ENCODE measurements at regions of chr14 and their contacts with region 1.

Region 1: DNA sequence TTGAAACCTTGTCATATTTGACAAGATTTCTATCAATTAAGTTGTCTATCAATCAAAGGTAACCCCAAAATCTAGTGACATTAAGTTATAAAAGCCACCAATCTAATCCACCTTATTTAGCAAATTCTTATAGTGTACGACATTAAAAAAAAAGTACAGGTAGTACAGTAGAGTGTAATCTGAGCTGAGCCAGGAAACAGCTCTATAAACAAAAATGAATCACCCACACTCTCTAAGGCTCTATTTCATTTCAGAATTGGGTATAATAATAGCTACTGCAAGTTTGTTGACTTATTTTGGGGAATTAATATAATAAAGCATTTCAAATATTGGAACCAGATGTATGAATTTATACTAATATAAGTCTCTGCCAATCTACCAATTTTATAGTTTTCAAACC is 342.4 kb upstream of the FLRT2 start:
- DNase-seq: no peak
- H3K4me3 ChIP-seq: no peak overlapping the region
- H3K4me3 Mint-ChIP-seq: no peak overlapping the region
- H3K27ac Mint-ChIP-seq: no peak overlapping the region
- H3K4me1 ChIP-seq: peaks cover 20% of the 10 kb centered on the region
- H3K4me1 Mint-ChIP-seq: no peaks in the 10 kb centered on the region
- H3K27me3 ChIP-seq: no peaks in the 10 kb centered on the region
- H3K27me3 Mint-ChIP-seq: no peaks in the 10 kb centered on the region
- CTCF ChIP-seq: no peak

Region 2: DNA sequence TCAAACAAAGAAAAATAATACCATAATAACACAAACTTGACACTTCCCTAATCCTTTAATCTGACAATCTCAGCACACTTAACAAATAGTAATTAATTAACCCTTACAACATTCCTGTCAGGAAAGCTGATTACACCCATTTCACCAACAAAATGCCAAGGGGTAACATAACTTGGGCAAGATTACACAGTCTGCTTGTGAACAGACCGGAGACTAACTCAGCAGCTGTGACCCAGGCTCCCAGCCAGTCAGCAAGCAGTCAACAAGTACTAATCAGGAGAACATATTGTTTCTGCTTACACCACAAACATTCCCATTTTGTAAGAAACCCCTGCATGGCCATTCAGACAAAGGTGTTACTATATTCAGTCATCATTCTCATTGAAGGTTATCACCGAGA is 250.1 kb before region 1 on chr14:
- CTCF ChIA-PET with region 1: no interaction called
- POLR2A ChIA-PET with region 1: no interaction called
- intact Hi-C with region 1: no loop called
- DNase-seq: no peak
- H3K4me3 ChIP-seq: no peak overlapping the region
- H3K4me3 Mint-ChIP-seq: no peak overlapping the region
- H3K27ac Mint-ChIP-seq: no peak overlapping the region
- H3K4me1 ChIP-seq: no peaks in the 10 kb centered on the region
- H3K4me1 Mint-ChIP-seq: no peaks in the 10 kb centered on the region
- H3K27me3 ChIP-seq: no peaks in the 10 kb centered on the region
- H3K27me3 Mint-ChIP-seq: peaks cover 8% of the 10 kb centered on the region
- CTCF ChIP-seq: no peak

Region 3: GRCh38 chr14:85165094-85165493 is 22.4 kb before region 1 on chr14:
- CTCF ChIA-PET with region 1: no interaction called
- POLR2A ChIA-PET with region 1: no interaction called
- intact Hi-C with region 1: no loop called
- DNase-seq: no peak
- H3K4me3 ChIP-seq: no peak overlapping the region
- H3K4me3 Mint-ChIP-seq: no peak overlapping the region
- H3K27ac Mint-ChIP-seq: no peak overlapping the region
- H3K4me1 ChIP-seq: no peaks in the 10 kb centered on the region
- H3K4me1 Mint-ChIP-seq: no peaks in the 10 kb centered on the region
- H3K27me3 ChIP-seq: no peaks in the 10 kb centered on the region
- H3K27me3 Mint-ChIP-seq: no peaks in the 10 kb centered on the region
- CTCF ChIP-seq: no peak

Region 4: DNA sequence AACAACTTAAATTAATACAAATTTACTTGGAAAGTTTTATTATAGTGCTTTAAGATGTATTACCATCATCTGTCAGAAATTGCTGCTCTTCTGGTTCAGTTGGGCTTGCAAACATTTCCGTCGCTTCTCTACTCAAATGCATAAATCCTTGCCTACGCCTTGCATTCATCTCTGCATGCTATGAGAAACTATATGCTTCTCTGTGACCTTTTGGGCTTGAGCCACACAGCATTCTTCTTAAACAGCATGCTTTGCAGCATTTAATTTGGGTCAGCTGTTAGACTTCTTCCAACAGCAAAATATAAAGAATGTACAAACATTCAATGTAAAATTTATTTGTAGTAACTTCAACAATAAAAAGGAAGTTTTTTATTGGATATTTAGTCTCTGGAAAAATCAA is 36.7 kb after region 1 on chr14:
- CTCF ChIA-PET with region 1: no interaction called
- POLR2A ChIA-PET with region 1: no interaction called
- intact Hi-C with region 1: loop called (anchors 2 kb)
- DNase-seq: no peak
- H3K4me3 ChIP-seq: no peak overlapping the region
- H3K4me3 Mint-ChIP-seq: no peak overlapping the region
- H3K27ac Mint-ChIP-seq: no peak overlapping the region
- H3K4me1 ChIP-seq: no peaks in the 10 kb centered on the region
- H3K4me1 Mint-ChIP-seq: no peaks in the 10 kb centered on the region
- H3K27me3 ChIP-seq: no peaks in the 10 kb centered on the region
- H3K27me3 Mint-ChIP-seq: no peaks in the 10 kb centered on the region
- CTCF ChIP-seq: no peak

Region 5: DNA sequence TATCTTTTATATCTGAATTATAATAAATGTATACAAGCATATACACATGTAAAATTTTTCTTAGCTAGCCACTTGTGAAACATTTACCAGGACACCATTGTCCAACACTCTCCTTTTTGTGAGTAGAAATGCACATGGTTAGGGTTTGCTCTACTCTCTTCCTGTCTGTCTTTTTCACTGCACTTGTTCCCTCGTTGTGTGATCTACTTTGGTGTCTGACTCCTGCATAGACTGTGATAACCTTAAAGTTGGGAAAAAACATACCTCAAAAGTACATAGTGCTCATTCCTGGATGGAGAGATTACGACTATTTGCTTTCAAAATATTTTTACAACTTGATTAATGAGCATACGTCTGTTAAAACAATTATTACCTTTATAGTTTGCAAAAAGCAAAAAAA is 48.3 kb after region 1 on chr14:
- CTCF ChIA-PET with region 1: no interaction called
- POLR2A ChIA-PET with region 1: no interaction called
- intact Hi-C with region 1: loop called (anchors 1 kb)
- DNase-seq: peak in 1 of 2 experiments; percentile 12
- H3K4me3 ChIP-seq: no peak overlapping the region
- H3K4me3 Mint-ChIP-seq: no peak overlapping the region
- H3K27ac Mint-ChIP-seq: no peak overlapping the region
- H3K4me1 ChIP-seq: peaks cover 8% of the 10 kb centered on the region; the same call in 1 of the 2 replicates
- H3K4me1 Mint-ChIP-seq: peaks cover 25% of the 10 kb centered on the region
- H3K27me3 ChIP-seq: no peaks in the 10 kb centered on the region
- H3K27me3 Mint-ChIP-seq: no peaks in the 10 kb centered on the region
- CTCF ChIP-seq: no peak

Region 6: GRCh38 chr14:85471727-85472126 is 284.2 kb after region 1 on chr14:
- CTCF ChIA-PET with region 1: no interaction called
- POLR2A ChIA-PET with region 1: no interaction called
- intact Hi-C with region 1: loop called (anchors 1 kb)
- DNase-seq: peak; percentile 84 to 93
- H3K4me3 ChIP-seq: no peak overlapping the region
- H3K4me3 Mint-ChIP-seq: peak overlapping the region; percentile 6
- H3K27ac Mint-ChIP-seq: no peak overlapping the region
- H3K4me1 ChIP-seq: peaks cover 30% of the 10 kb centered on the region
- H3K4me1 Mint-ChIP-seq: peaks cover 9% of the 10 kb centered on the region
- H3K27me3 ChIP-seq: no peaks in the 10 kb centered on the region
- H3K27me3 Mint-ChIP-seq: no peaks in the 10 kb centered on the region
- CTCF ChIP-seq: no peak